ENCODE measurements at regions of chr20 and their contacts with region 1.

Region 1: GRCh38 chr20:41482647-41483552 is 116.3 kb upstream of the EMILIN3 start:
- DNase-seq: no peak
- H3K4me3 ChIP-seq: no peak overlapping the region
- H3K4me3 Mint-ChIP-seq: no peak overlapping the region
- H3K27ac ChIP-seq: no peak overlapping the region
- H3K27ac Mint-ChIP-seq: peak overlapping the region in 3 of 7 donors; percentile 47 to 63 (median 54)
- H3K4me1 ChIP-seq: no peaks in the 10 kb centered on the region
- H3K4me1 Mint-ChIP-seq: peaks cover 5 to 11% (median 11%) of the 10 kb centered on the region in 4 donors
- H3K27me3 ChIP-seq: no peaks in the 10 kb centered on the region
- H3K27me3 Mint-ChIP-seq: no peaks in the 10 kb centered on the region

Region 2: DNA sequence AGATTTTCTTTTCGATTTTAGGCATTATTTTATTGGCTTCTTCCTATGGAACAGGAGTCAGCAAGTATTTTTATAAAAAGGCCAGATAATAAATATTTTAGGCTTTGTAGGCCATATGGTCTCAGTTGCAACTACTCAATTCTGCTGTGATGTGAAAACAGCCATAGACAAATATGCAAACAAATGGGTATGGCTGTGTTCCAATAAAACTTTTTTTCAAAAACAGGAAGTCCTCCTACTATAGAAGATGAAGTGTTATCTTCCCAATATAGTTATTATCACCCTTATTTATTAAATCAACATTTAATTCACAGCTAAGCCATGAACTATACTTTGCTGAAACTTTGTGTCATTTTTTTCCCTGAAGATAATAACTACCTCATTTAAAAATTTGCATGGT is 78.1 kb after region 1 on chr20:
- CTCF ChIA-PET with region 1: no interaction called
- POLR2A ChIA-PET with region 1: no interaction called
- intact Hi-C with region 1: no loop called
- DNase-seq: no peak
- H3K4me3 ChIP-seq: no peak overlapping the region
- H3K4me3 Mint-ChIP-seq: peak overlapping the region in 2 of 8 donors; percentile 15 to 73
- H3K27ac ChIP-seq: no peak overlapping the region
- H3K27ac Mint-ChIP-seq: peak overlapping the region in 2 of 7 donors; percentile 20 to 39
- H3K4me1 ChIP-seq: peaks cover 45% of the 10 kb centered on the region
- H3K4me1 Mint-ChIP-seq: peaks cover 63 to 78% (median 70%) of the 10 kb centered on the region in 4 donors
- H3K27me3 ChIP-seq: no peaks in the 10 kb centered on the region
- H3K27me3 Mint-ChIP-seq: no peaks in the 10 kb centered on the region

Region 3: GRCh38 chr20:41617931-41618806 is 135.3 kb after region 1 on chr20 and contains the start of gene CHD6:
- CTCF ChIA-PET with region 1: no interaction called
- POLR2A ChIA-PET with region 1: no interaction called
- intact Hi-C with region 1: loop called (anchors 10 kb)
- DNase-seq: peak; percentile 99 to 100 (median 100)
- H3K4me3 ChIP-seq: peak within 1 kb of the TSS; percentile 7 to 69
- H3K4me3 Mint-ChIP-seq: peak within 1 kb of the TSS; percentile 92 to 95 (median 94)
- H3K27ac ChIP-seq: peak within 1 kb of the TSS; percentile 41
- H3K27ac Mint-ChIP-seq: peak within 1 kb of the TSS; percentile 88 to 96 (median 91)
- H3K4me1 ChIP-seq: peaks cover 41% of the 10 kb centered on the region
- H3K4me1 Mint-ChIP-seq: peaks cover 33 to 51% (median 38%) of the 10 kb centered on the region in 4 donors
- H3K27me3 ChIP-seq: no peaks in the 10 kb centered on the region
- H3K27me3 Mint-ChIP-seq: no peaks in the 10 kb centered on the region
- total RNA-seq, gene CHD6: 93.2 to 96.8 TPM

Measured in CD4-positive, alpha-beta memory T cell (primary cell).